Heart left ventricle (tissue), 16 donors: ENCODE measurements at regions of chr2 and their contacts with region 1.

Region 1: DNA sequence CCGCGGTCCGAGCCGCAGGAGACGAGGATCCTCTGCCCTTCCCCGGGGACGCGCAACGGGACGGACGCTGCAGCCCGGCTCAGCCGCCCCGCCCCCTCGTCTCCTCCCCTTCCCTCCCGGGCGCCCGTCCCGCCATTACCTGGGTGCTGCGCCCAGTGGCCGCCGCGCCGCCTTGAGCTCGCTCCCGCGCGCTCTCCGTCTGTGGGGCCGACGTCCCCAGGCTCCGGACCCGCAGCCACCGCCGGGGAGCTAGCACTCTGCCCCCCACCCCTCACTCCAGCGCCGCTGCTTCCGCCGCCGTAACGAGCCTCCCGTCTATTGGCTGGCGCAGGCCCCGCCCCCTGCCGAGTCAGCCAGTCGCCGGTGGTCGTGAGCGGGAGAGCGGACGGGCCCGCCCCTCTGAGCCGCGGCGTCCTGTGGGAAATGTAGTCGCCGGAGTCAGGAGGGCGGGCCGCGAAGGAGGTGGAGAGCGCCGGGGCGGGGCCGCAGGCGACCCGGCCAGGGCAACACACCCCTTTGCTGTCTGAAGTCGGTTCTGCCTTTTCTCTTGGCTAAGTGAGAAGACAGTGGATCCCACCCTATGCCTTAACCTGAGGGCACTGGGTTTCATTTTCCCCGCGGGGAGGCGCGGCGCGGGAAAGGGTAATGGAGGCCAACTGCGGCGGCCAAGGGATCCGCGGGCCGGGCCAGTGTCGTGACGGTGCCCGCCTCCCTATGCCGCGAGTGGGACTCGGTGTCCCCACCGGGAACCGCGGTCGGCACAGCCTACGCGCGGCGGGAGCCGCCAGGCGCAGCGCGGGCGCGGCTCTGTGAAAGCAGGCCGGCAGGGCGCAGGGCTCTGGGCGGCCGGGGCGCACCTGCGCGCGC is at the start of gene SAP130:
- DNase-seq: peak; percentile 99
- ATAC-seq: peak; percentile 83 to 94 (median 93)
- H3K4me3 ChIP-seq: peak within 1 kb of the TSS; percentile 81 to 100 (median 93)
- H3K27ac ChIP-seq: peak within 1 kb of the TSS; percentile 91 to 100 (median 96)
- H3K4me1 ChIP-seq: peaks cover 0 to 23% (median 10%) of the 10 kb centered on the region in 12 donors
- H3K27me3 ChIP-seq: no peaks in the 10 kb centered on the region
- CTCF ChIP-seq: peak in 3 of 12 donors; percentile 10 to 16 (median 16)
- POLR2A ChIP-seq: peak; percentile 32 to 72
- total RNA-seq, gene SAP130: 11.4 to 20.3 (median 15.5) TPM

Region 2: DNA sequence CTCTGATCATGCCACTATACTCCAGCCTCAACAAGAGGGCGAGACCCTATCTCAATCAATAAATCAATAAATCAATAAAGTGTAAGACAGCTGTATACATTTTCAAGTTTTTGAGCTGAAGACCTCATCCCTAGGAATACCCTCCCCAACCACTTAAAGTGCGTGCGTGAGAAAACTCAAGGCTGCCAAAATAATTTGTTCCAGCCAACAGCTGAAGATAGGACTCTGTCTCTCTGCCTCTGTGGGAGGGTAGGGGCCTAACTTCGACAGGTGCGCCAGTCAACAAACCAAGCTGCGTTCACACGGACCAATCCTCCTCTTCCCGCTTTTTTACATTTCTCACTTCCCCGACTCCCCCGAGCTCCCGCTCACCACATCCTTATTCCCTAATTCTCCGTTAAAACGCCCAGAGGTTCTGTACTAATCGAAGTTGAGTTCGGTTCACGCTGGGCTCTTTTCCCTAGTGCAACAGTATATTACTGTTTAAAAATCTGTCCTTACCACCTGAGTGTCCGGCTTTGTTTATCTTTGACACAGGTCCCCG is 170.7 kb before region 1 on chr2:
- intact Hi-C with region 1: loop called in 1 of 10 experiments (anchors 10 kb)
- DNase-seq: no peak
- ATAC-seq: no peak
- H3K4me3 ChIP-seq: peak overlapping the region; percentile 59 to 96 (median 84)
- H3K27ac ChIP-seq: peak overlapping the region in 10 of 12 donors; percentile 44 to 87 (median 76)
- H3K4me1 ChIP-seq: peaks cover 0 to 54% (median 36%) of the 10 kb centered on the region in 12 donors
- H3K27me3 ChIP-seq: no peaks in the 10 kb centered on the region
- CTCF ChIP-seq: no peak
- POLR2A ChIP-seq: no peak

Region 3: DNA sequence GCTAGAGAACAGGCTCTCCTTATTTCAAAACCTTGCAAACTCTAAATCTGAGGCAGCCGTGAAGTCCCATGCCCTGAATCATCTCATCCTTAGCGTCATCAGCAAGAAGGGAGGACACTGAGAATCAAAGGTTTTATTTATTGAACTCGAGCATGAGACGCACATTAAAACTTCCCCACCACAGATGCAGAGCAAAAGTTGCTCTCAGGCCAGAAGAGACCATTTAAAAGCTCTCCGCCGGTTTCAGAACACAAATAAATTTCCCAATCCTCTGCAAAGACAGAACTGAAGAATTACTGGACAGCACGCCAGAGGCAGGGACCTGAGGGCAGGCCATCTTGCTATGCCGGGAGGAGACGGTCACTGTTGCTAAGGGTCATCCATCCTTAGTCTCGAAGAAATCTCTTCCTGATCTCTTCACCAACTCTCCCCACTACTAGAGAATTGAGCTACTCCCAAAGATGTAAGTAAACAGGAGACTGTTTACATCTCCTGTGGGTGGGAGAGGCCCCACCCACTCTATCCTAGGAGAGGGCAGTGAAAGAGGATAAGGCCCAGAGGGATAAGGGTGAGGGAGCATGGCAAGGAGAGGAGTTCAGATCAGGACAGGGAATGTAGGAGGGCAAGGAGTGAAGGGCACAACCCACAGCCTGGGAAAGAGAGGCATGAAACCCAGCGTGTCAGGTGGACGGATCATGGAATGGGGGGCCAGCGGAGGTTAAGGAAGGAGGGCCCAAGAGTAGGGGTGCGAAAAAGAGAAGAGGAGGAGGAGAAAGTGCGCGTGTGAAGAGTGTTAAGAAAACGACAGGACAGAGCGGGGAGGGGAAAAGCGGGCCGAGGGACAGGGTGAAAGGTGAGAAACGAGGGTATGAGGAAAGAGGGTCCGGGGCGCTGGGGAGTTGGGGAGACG is 143.3 kb before region 1 on chr2:
- intact Hi-C with region 1: loop called in 5 of 10 experiments (anchors 2 to 10 kb)
- DNase-seq: no peak
- ATAC-seq: no peak
- H3K4me3 ChIP-seq: peak overlapping the region; percentile 45 to 90 (median 72)
- H3K27ac ChIP-seq: peak overlapping the region; percentile 41 to 94 (median 92)
- H3K4me1 ChIP-seq: peaks cover 0 to 58% (median 48%) of the 10 kb centered on the region in 12 donors
- H3K27me3 ChIP-seq: no peaks in the 10 kb centered on the region
- CTCF ChIP-seq: peak in 1 of 12 donors; percentile 4
- POLR2A ChIP-seq: no peak

Region 4: DNA sequence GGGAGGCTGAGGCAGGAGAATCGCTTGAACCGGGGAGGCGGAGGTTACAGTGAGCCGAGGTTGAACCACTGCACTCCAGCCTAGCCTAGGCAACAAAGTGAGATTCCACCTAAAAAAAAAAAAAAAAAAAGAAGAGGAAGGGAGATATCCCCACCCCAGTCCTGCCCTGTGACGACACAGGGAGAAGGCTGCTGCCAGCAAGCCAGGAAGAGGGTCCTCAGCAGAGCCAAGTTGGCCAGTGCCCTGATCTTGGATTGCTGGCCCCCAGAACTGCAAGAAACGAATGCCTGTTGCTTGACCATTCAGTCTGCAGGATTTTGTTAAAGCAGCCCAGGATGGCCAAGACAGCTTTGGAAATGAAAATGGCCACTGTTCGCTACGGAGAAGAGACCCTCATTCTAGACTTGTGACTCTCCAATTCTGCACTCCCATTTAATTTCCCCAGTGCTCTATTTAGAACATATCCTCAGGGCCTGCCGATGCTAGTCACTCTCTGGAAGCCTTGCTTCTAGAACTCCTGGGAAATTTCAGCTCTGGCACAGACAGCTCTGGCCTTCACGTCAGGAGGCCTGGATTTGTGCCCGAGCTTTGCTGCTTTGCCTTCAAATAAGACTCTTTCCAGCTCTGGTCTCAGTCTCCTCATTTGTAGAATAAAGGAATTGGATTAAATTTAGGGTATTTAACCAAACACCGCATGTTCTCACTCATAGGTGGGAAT is 126.5 kb before region 1 on chr2:
- intact Hi-C with region 1: loop called in 1 of 10 experiments (anchors 10 kb)
- DNase-seq: peak; percentile 70 to 83 (median 75)
- ATAC-seq: peak; percentile 91 to 97 (median 94)
- H3K4me3 ChIP-seq: peak overlapping the region in 3 of 12 donors; percentile 7 to 20 (median 7)
- H3K27ac ChIP-seq: peak overlapping the region in 10 of 12 donors; percentile 43 to 75 (median 68)
- H3K4me1 ChIP-seq: peaks cover 0 to 8% (median 4%) of the 10 kb centered on the region in 12 donors
- H3K27me3 ChIP-seq: peaks cover 0 to 9% (median 0%) of the 10 kb centered on the region in 9 donors
- CTCF ChIP-seq: no peak
- POLR2A ChIP-seq: no peak

Region 5: DNA sequence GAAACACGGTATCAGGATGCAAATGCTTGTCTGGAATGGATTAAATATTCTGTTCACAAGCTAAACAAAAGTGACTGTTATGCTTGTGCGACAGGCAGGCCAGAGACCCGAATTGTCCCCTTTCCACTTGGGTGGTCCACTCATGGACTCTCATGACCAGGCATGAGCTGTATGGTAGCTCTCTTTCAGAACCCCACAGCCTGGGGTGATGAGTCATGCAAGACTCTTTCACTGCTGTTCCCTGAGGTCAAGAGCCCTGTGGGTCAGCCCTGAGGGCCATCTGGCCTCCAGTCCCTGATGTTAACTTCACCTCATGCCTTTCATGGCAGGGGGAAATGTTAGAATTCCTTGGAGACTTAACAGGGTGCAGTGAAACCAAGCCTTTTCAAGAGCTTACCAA is 13.5 kb after region 1 on chr2:
- intact Hi-C with region 1: no loop called
- DNase-seq: no peak
- ATAC-seq: no peak
- H3K4me3 ChIP-seq: no peak overlapping the region
- H3K27ac ChIP-seq: no peak overlapping the region
- H3K4me1 ChIP-seq: no peaks in the 10 kb centered on the region
- H3K27me3 ChIP-seq: peaks cover 0 to 10% (median 0%) of the 10 kb centered on the region in 9 donors
- CTCF ChIP-seq: no peak
- POLR2A ChIP-seq: no peak

Region 6: GRCh38 chr2:128090945-128091725 is 63.1 kb after region 1 on chr2 and contains the start of gene UGGT1:
- intact Hi-C with region 1: loop called in 9 of 10 experiments (anchors 1 to 10 kb)
- DNase-seq: peak; percentile 93 to 96 (median 96)
- ATAC-seq: peak; percentile 99 to 100 (median 100)
- H3K4me3 ChIP-seq: peak within 1 kb of the TSS; percentile 73 to 100 (median 90)
- H3K27ac ChIP-seq: peak within 1 kb of the TSS; percentile 51 to 92 (median 86)
- H3K4me1 ChIP-seq: peaks cover 0 to 26% (median 13%) of the 10 kb centered on the region in 12 donors
- H3K27me3 ChIP-seq: no peaks in the 10 kb centered on the region
- CTCF ChIP-seq: peak in 1 of 12 donors; percentile 5
- POLR2A ChIP-seq: peak in 1 of 2 donors; percentile 78
- total RNA-seq, gene UGGT1: 24.0 to 77.4 (median 33.3) TPM

Region 7: DNA sequence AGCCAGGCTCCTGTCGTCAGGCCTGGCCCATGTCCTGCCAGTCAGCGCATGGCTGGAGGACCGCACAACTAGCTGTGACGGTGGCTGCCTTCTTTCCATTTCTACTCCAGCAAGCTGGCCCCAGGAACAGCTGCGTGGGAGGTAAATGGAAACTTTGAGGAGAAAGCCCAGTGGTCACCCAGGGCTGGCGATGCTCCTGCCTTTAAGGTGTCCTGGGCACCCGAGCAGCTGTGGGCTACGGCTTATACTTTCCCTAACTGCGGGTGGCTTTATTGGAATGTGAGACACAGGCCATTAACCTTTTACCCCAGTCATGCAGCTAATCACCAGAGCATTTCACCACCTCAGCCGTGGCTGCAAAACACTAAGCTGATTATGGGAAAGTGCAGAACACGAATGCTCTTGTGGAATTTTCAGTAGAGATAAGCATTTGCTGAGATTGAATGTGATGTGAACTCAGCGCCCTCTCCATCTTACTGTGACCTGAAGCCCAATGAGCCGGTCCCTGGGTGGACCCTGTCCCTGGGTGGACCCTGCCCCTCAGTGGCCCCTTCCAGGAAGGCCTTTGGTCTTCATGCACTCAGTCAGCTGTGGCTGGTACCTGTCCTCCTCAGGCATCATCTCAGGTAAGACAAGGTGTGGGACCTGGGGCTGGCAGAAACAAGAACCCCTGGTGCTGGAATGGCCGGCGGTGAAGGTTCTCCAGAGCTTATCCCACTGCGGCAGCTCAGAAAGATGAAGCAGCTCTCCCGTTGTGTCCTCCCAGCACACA is 566.0 kb after region 1 on chr2:
- intact Hi-C with region 1: no loop called
- DNase-seq: peak in 4 of 5 donors; percentile 30 to 58 (median 49)
- ATAC-seq: peak; percentile 59 to 82 (median 66)
- H3K4me3 ChIP-seq: no peak overlapping the region
- H3K27ac ChIP-seq: peak overlapping the region in 2 of 12 donors; percentile 19 to 31
- H3K4me1 ChIP-seq: peaks cover 0 to 25% (median 0%) of the 10 kb centered on the region in 12 donors
- H3K27me3 ChIP-seq: peaks cover 0 to 3% (median 0%) of the 10 kb centered on the region in 9 donors
- CTCF ChIP-seq: no peak
- POLR2A ChIP-seq: no peak